ENCODE measurements at regions of chr1 and their contacts with region 1.

Region 1: DNA sequence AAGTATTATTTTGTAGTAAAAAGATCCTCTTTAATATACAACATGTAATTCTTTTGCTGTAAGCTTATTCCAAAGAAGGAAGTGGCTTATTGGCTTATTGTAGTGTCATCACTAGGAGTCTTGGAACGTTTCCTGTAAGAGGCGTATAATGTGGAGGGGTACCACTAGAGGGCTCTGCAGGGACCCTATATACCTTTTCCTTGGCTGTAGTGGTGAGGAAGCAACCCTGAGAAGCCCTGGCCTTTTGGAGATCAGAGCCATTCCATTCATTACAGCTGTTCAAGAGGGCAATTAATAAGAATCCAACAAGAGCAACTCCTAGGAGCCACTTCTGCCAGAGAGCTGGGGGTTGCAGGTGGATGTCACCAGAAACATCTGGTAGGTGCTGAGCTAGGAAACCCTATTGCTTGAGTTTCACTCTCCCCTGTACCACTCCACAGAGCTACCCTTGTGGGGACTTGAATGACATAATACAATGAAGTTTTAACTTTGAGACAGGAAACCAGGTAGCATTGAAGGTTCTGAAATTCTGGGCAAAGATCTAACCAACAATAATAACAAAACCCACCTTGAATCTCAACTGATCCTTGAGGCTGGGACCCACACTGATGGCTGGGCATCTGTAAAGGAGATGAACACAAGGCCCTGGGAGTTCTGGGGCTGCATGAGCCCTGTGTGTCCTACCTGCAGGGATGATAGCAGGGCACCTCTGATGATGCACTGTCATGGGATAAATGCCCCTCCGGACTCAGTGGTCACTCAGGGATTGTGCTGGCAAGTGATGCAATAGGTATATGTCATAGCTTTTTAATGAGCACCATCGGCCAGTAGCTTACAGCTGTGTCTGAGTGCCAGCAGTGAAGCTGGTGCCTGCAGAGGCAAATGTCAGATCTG is 160.2 kb upstream of the COA6 start:
- DNase-seq: peak; percentile 75
- H3K4me3 Mint-ChIP-seq: peak overlapping the region; percentile 86
- H3K27ac Mint-ChIP-seq: no peak overlapping the region
- H3K4me1 Mint-ChIP-seq: peaks cover 34% of the 10 kb centered on the region
- H3K27me3 Mint-ChIP-seq: peaks cover 22% of the 10 kb centered on the region

Region 2: GRCh38 chr1:234188454-234188792 is 24.6 kb before region 1 on chr1:
- intact Hi-C with region 1: no loop called
- DNase-seq: peak; percentile 74
- H3K4me3 Mint-ChIP-seq: no peak overlapping the region
- H3K27ac Mint-ChIP-seq: no peak overlapping the region
- H3K4me1 Mint-ChIP-seq: peaks cover 2% of the 10 kb centered on the region
- H3K27me3 Mint-ChIP-seq: peaks cover 49% of the 10 kb centered on the region

Region 3: GRCh38 chr1:234230414-234230862 is 17.4 kb after region 1 on chr1:
- intact Hi-C with region 1: loop called (anchors 2 kb)
- DNase-seq: peak; percentile 80
- H3K4me3 Mint-ChIP-seq: peak overlapping the region; percentile 42
- H3K27ac Mint-ChIP-seq: peak overlapping the region; percentile 39
- H3K4me1 Mint-ChIP-seq: peaks cover 15% of the 10 kb centered on the region
- H3K27me3 Mint-ChIP-seq: peaks cover 18% of the 10 kb centered on the region